ENCODE measurements at regions of chr11 and their contacts with region 1.

Region 1: GRCh38 chr11:8652140-8652539 is 30.3 kb downstream of the TRIM66 start:
- DNase-seq: peak; percentile 99
- ATAC-seq: peak; percentile 92
- H3K4me3 ChIP-seq: no peak overlapping the region
- H3K27ac ChIP-seq: no peak overlapping the region
- H3K4me1 ChIP-seq: peaks cover 12% of the 10 kb centered on the region
- H3K27me3 ChIP-seq: no peaks in the 10 kb centered on the region
- CTCF ChIP-seq: no peak
- POLR2A ChIP-seq: no peak
- RAD21 ChIP-seq: no peak

Region 2: GRCh38 chr11:8180469-8180868 is 471.7 kb before region 1 on chr11:
- CTCF ChIA-PET with region 1: no interaction called
- POLR2A ChIA-PET with region 1: no interaction called
- dilution Hi-C with region 1: no loop called
- in situ Hi-C with region 1: no loop called
- intact Hi-C with region 1: no loop called
- DNase-seq: no peak
- ATAC-seq: no peak
- H3K4me3 ChIP-seq: no peak overlapping the region
- H3K27ac ChIP-seq: no peak overlapping the region
- H3K4me1 ChIP-seq: no peaks in the 10 kb centered on the region
- H3K27me3 ChIP-seq: peaks cover 8% of the 10 kb centered on the region
- CTCF ChIP-seq: no peak
- POLR2A ChIP-seq: no peak
- RAD21 ChIP-seq: no peak

Region 3: GRCh38 chr11:8786933-8787332 is 134.8 kb after region 1 on chr11:
- CTCF ChIA-PET with region 1: no interaction called
- POLR2A ChIA-PET with region 1: interaction called, 27 read pairs
- dilution Hi-C with region 1: no loop called
- in situ Hi-C with region 1: no loop called
- intact Hi-C with region 1: no loop called
- DNase-seq: no peak
- ATAC-seq: peak; percentile 57
- H3K4me3 ChIP-seq: no peak overlapping the region
- H3K27ac ChIP-seq: no peak overlapping the region
- H3K4me1 ChIP-seq: peaks cover 8% of the 10 kb centered on the region
- H3K27me3 ChIP-seq: no peaks in the 10 kb centered on the region
- CTCF ChIP-seq: peak; percentile 30
- POLR2A ChIP-seq: no peak
- RAD21 ChIP-seq: no peak